ENCODE measurements at regions of chr7 and their contacts with region 1.

Region 1: GRCh38 chr7:87345166-87345927 is at the start of gene CROT:
- DNase-seq: peak; percentile 98
- ATAC-seq: peak; percentile 100
- total RNA-seq, gene CROT: 6.9 TPM

Region 2: GRCh38 chr7:87876040-87876868 is 530.9 kb after region 1 on chr7 and contains the starts of genes DBF4 and SLC25A40:
- intact Hi-C with region 1: loop called (anchors 5 kb)
- DNase-seq: peak; percentile 98
- ATAC-seq: peak; percentile 100
- total RNA-seq, gene DBF4: 1.4 TPM
- total RNA-seq, gene SLC25A40: 23.5 TPM

Measured in Right ventricle myocardium inferior (tissue), 1 donor.